ENCODE measurements at regions of chr21 and their contacts with region 1.

Region 1: GRCh38 chr21:29477941-29478340 is 179.2 kb downstream of the BACH1 start:
- DNase-seq: no peak
- H3K4me3 ChIP-seq: no peak overlapping the region
- H3K27ac ChIP-seq: no peak overlapping the region
- H3K4me1 ChIP-seq: peaks cover 0 to 11% (median 1%) of the 10 kb centered on the region in 6 donors
- H3K27me3 ChIP-seq: no peaks in the 10 kb centered on the region
- CTCF ChIP-seq: no peak
- POLR2A ChIP-seq: no peak

Region 2: GRCh38 chr21:29271927-29272333 is 206.0 kb before region 1 on chr21:
- intact Hi-C with region 1: no loop called
- DNase-seq: no peak
- H3K4me3 ChIP-seq: no peak overlapping the region
- H3K27ac ChIP-seq: no peak overlapping the region
- H3K4me1 ChIP-seq: peaks cover 0 to 3% (median 0%) of the 10 kb centered on the region in 6 donors
- H3K27me3 ChIP-seq: no peaks in the 10 kb centered on the region
- CTCF ChIP-seq: no peak
- POLR2A ChIP-seq: no peak

Region 3: DNA sequence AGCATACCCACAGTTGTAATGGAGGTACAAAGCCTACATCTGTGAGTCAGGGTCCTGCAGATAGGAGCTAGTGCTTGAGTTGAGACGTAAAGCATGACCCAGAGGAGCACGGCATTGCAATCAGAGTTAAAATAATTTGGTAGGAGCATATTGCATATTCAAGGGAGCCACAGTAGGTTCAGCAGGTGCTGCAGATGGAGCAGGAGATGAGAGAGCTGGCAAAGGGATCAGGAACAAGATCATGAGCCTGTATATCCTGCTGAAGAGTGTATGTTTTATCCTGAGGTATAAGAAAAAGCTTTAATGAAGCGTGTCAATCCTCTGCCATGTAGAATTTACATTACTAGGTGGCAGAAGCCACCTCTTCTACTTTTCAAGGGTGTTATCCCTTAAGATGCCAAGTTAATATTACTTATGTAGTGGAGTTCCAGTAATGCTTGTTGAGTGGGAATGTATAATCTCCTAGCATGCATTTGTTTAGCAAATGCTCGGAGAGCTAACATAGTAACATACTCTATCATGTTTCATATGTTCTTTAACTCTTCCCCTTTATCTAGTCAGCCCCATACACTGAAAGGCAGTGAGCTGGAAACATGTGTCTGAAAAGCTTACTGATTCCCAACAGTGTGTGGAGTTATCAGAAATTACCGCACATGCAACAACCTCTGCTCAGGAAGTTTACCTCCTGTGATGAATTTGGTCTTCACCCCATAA is 161.6 kb after region 1 on chr21:
- intact Hi-C with region 1: loop called (anchors 10 kb)
- DNase-seq: no peak
- H3K4me3 ChIP-seq: no peak overlapping the region
- H3K27ac ChIP-seq: peak overlapping the region in 4 of 8 donors; percentile 53 to 81 (median 71)
- H3K4me1 ChIP-seq: peaks cover 0 to 24% (median 12%) of the 10 kb centered on the region in 6 donors
- H3K27me3 ChIP-seq: no peaks in the 10 kb centered on the region
- CTCF ChIP-seq: no peak
- POLR2A ChIP-seq: no peak

Region 4: DNA sequence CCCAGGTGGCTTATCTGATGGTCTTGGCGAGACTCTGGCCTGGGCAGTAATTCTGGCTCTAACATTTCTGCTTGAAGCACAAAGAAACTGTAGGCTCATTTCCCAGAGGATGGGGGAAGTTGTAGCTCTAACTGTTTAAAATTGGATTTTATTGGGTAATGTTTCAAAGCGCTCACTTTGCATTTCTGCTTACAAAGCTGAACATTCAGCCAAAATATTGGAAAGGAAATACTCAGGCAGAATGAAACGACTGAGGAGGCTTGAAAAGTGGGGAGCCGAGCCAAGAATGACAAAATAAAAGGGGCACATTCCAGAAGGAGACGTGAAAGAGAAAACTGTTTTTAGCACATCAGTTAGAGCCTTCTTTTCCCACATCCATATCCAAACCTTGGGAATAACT is 259.2 kb after region 1 on chr21:
- intact Hi-C with region 1: no loop called
- DNase-seq: no peak
- H3K4me3 ChIP-seq: no peak overlapping the region
- H3K27ac ChIP-seq: no peak overlapping the region
- H3K4me1 ChIP-seq: no peaks in the 10 kb centered on the region
- H3K27me3 ChIP-seq: no peaks in the 10 kb centered on the region
- CTCF ChIP-seq: no peak
- POLR2A ChIP-seq: no peak

Region 5: GRCh38 chr21:29849735-29850176 is 371.8 kb after region 1 on chr21:
- intact Hi-C with region 1: loop called (anchors 5 kb)
- DNase-seq: no peak
- H3K4me3 ChIP-seq: no peak overlapping the region
- H3K27ac ChIP-seq: no peak overlapping the region
- H3K4me1 ChIP-seq: peaks cover 0 to 4% (median 0%) of the 10 kb centered on the region in 6 donors
- H3K27me3 ChIP-seq: no peaks in the 10 kb centered on the region
- CTCF ChIP-seq: peak in 10 of 11 experiments; percentile 30 to 82 (median 68)
- POLR2A ChIP-seq: no peak

Measured in spleen (tissue), 13 donors.